ENCODE measurements at regions of chr4 and their contacts with region 1.

Region 1: GRCh38 chr4:155660436-155660835 is 6.2 kb upstream of the GUCY1A1 start:
- DNase-seq: no peak
- H3K4me3 ChIP-seq: no peak overlapping the region
- H3K27ac ChIP-seq: no peak overlapping the region
- H3K4me1 ChIP-seq: no peaks in the 10 kb centered on the region
- H3K27me3 ChIP-seq: no peaks in the 10 kb centered on the region
- CTCF ChIP-seq: no peak

Region 2: DNA sequence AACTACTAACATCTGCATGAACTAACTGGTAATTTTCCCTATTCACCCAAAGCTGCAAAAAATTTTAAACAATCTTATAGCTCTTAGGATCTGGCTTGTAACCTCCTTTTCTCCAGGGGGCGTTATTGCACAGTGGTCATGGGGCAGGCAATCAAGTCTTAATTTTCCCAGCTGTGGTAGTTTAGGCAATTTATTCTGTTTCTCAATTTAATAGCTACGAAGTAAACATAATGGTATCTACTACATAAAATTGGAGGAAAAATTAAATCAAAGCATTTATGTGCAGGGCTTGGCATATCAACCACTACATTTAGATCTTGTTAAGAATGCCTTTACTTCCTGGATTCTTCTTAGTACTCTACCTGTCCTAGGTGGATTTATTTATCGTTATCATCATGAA is 131.2 kb before region 1 on chr4:
- intact Hi-C with region 1: loop called (anchors 5 kb)
- DNase-seq: no peak
- H3K4me3 ChIP-seq: no peak overlapping the region
- H3K27ac ChIP-seq: no peak overlapping the region
- H3K4me1 ChIP-seq: peaks cover 0 to 4% of the 10 kb centered on the region in 2 donors
- H3K27me3 ChIP-seq: no peaks in the 10 kb centered on the region
- CTCF ChIP-seq: peak in 1 of 3 experiments; percentile 28

Region 3: DNA sequence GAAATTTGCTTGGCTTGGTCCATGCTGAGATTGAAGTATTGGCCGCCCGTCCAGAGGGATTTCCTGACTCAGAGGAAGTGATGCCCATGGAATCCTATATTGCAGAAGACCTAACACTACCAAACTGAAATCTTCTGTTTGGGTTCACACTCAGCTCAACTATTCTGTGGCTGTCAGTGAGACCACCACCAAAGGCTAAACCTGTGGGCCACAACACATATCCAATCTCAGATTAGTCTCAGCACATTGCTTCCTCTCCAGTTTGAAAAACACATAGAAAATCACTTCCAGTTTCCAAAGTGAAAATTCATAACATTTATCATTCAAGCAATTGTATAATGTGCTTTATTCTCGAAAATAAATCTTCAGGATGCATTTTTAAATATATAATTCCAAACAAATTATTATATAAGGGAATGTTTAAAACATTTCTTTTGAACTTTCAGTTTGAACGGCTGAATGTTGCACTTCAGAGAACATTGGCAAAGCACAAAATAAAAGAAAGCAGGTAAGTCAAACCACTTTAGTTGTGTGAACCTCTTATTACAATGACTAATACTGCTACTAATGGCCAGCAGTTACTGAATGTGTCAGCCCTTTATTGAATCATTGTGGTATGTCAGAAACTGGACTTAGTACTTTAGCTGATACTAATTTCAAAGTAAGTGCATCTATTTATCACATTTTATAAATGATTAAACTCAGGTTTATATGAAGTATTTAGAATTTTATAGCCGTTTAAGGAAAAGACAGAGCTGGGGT is 43.2 kb after region 1 on chr4:
- intact Hi-C with region 1: no loop called
- DNase-seq: no peak
- H3K4me3 ChIP-seq: no peak overlapping the region
- H3K27ac ChIP-seq: no peak overlapping the region
- H3K4me1 ChIP-seq: peaks cover 0 to 6% of the 10 kb centered on the region in 2 donors
- H3K27me3 ChIP-seq: no peaks in the 10 kb centered on the region
- CTCF ChIP-seq: no peak